ENCODE measurements at regions of chr17 and their contacts with region 1.

Region 1: GRCh38 chr17:53894591-53894990 is 71.9 kb downstream of the KIF2B start:
- DNase-seq: no peak
- ATAC-seq: no peak
- H3K4me3 ChIP-seq: no peak overlapping the region
- H3K27ac ChIP-seq: no peak overlapping the region
- H3K4me1 ChIP-seq: no peaks in the 10 kb centered on the region
- H3K27me3 ChIP-seq: no peaks in the 10 kb centered on the region
- CTCF ChIP-seq: no peak
- POLR2A ChIP-seq: no peak

Region 2: GRCh38 chr17:53807286-53807685 is 87.3 kb before region 1 on chr17:
- intact Hi-C with region 1: no loop called
- DNase-seq: no peak
- ATAC-seq: no peak
- H3K4me3 ChIP-seq: no peak overlapping the region
- H3K27ac ChIP-seq: no peak overlapping the region
- H3K4me1 ChIP-seq: no peaks in the 10 kb centered on the region
- H3K27me3 ChIP-seq: no peaks in the 10 kb centered on the region
- CTCF ChIP-seq: no peak
- POLR2A ChIP-seq: no peak

Region 3: DNA sequence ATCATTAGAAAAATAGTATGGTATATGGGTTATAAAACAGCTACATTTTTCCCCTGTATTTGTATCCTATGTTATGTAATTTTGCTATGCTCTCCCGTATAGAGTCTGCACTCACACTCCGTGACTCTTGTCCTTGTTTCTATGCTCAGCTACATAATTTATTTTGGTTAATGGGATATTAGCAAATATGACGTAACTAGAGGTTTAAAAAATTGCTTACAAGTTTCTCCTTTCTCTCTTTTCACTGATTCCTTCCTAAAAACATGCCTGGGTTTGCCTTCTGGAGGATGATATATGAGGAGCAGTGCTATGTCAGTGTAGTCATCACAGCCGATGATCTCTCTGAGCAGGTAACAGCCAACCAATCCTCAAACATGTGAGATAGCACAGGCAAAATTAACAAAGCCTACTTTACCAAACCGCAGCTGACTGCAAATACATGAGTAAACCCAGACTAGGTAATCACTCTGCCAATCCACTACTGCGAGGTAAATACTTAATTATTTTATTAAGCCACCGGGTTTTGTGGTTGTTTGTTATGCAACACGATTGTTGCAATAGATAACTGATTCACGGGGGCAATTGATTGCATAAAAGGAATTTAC is 55.0 kb after region 1 on chr17:
- intact Hi-C with region 1: loop called in 1 of 10 experiments (anchors 10 kb)
- DNase-seq: no peak
- ATAC-seq: no peak
- H3K4me3 ChIP-seq: no peak overlapping the region
- H3K27ac ChIP-seq: no peak overlapping the region
- H3K4me1 ChIP-seq: no peaks in the 10 kb centered on the region
- H3K27me3 ChIP-seq: no peaks in the 10 kb centered on the region
- CTCF ChIP-seq: no peak
- POLR2A ChIP-seq: no peak

Measured in heart left ventricle (tissue), 16 donors.